Breast epithelium (tissue), 4 donors: ENCODE measurements at regions of chr7 and their contacts with region 1.

Region 1: GRCh38 chr7:100830396-100830795 is 3.1 kb upstream of the EPHB4 start:
- DNase-seq: no peak
- H3K4me3 ChIP-seq: no peak overlapping the region
- H3K27ac ChIP-seq: no peak overlapping the region
- H3K4me1 ChIP-seq: no peaks in the 10 kb centered on the region
- H3K27me3 ChIP-seq: no peaks in the 10 kb centered on the region
- CTCF ChIP-seq: no peak
- POLR2A ChIP-seq: no peak

Region 2: DNA sequence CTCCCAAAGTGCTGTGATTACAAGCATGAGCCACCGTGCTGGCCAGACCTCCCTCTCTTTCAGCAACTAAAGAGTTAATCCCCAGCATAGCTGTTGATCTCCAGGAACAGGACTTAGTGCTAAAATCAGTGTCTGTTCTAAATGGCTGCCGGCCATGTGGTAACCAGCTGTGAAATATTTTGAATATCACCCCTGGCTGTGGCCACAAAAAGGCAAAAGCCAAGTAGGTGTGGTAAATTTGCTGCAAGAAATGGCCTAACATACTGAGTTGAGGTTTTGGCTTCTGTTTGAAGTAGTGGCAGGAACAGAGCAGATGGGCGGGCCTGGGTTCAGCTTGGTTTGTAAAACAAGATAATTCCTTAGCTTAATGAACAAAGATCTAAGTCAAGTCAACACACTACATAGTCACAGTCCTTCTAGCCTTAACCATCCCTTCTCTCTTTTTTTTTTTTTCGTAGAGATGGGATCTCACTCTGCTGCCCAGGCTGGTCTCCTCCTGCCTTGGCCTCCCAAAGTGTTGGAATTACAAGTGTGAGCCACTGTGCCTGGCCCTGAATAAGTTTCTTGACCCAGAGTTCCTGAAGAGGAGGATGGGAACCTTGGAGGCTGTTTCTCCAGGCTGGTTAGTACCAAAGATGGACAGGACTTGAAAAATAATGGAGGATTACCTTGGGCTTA is 314.1 kb before region 1 on chr7:
- intact Hi-C with region 1: no loop called
- DNase-seq: peak in 1 of 2 donors; percentile 52
- H3K4me3 ChIP-seq: no peak overlapping the region
- H3K27ac ChIP-seq: no peak overlapping the region
- H3K4me1 ChIP-seq: no peaks in the 10 kb centered on the region
- H3K27me3 ChIP-seq: no peaks in the 10 kb centered on the region
- CTCF ChIP-seq: no peak
- POLR2A ChIP-seq: no peak

Region 3: GRCh38 chr7:100803398-100804233 is 26.8 kb before region 1 on chr7:
- intact Hi-C with region 1: loop called (anchors 1 kb)
- DNase-seq: peak; percentile 79 to 86
- H3K4me3 ChIP-seq: peak overlapping the region in 1 of 3 donors; percentile 29
- H3K27ac ChIP-seq: peak overlapping the region; percentile 80 to 86
- H3K4me1 ChIP-seq: peaks cover 0 to 20% of the 10 kb centered on the region in 2 donors
- H3K27me3 ChIP-seq: no peaks in the 10 kb centered on the region
- CTCF ChIP-seq: no peak
- POLR2A ChIP-seq: no peak